Posterior vena cava (tissue), 2 donors: ENCODE measurements at regions of chr4 and their contacts with region 1.

Region 1: GRCh38 chr4:111020961-111021360 is 398.1 kb upstream of the PITX2 start:
- DNase-seq: no peak

Region 2: DNA sequence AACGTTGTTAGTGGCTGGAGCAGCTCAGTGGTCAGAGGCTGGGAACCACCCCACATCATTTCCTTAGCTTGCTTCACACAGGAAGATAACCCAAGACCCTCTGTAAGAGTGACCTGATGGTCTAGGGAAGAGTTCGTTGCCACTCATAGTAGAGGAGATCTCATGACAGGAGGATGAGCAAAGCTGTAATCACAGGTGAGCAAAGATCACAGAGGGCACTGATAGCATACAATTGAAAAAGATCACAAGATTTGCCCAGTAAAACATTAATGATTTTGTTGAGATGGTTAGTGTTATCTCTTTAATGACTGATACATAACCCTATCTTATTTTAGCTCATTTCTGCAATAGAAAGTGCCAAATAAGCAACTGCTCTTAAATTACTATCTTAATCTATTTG is 1660.0 kb after region 1 on chr4:
- intact Hi-C with region 1: loop called in 1 of 2 experiments (anchors 5 kb)
- DNase-seq: no peak